ENCODE measurements at regions of chr14 and their contacts with region 1.

Region 1: GRCh38 chr14:35121887-35122695 is at the starts of genes PPP2R3C and PRORP:
- DNase-seq: peak; percentile 97 to 98
- H3K4me3 ChIP-seq: peak within 1 kb of the TSS; percentile 9 to 45 (median 44)
- H3K27ac ChIP-seq: peak within 1 kb of the TSS; percentile 90 to 97 (median 97)
- H3K4me1 ChIP-seq: peaks cover 6 to 24% of the 10 kb centered on the region in 2 donors
- H3K27me3 ChIP-seq: no peaks in the 10 kb centered on the region
- CTCF ChIP-seq: no peak
- POLR2A ChIP-seq: peak in 1 of 2 donors; percentile 70
- total RNA-seq, gene PPP2R3C: 15.1 to 31.0 (median 24.9) TPM
- total RNA-seq, gene PRORP: 23.6 to 45.4 (median 42.3) TPM

Region 2: DNA sequence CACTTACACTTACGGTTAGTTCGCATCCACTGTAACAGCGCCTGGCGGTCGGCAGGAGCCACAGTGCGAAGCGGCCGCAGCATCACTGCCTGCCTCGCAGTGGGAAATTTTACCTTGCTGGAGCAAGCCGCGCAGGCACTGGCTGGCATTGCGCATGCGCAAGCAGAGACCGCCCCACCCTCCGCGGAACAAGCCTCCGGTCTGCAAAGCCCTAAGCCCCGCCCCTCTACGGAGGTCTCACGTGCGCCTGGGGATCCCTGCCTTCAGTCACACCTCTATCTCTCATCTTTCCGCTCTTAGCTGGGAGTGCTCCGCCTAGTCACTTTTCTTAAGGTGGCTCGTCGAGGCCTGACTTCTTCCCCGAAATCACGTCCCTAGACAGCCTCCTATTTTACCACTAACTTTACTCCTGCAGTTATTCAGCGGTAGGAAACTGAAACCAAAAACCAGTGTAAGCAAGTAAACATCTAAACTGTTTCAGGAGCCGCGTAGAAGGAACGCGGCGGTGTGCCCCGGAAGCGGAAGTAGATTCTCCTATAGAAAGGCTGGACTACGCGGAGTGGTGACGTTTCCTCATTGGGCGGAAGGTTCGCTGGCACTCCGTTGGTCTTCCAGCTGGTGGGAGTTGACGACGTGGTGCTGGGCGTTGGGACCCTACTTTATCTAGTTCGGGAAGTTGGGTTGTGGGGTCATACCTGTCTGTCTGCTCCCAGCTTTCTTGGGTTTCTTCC is 139.5 kb before region 1 on chr14 and contains the start of gene SRP54:
- intact Hi-C with region 1: loop called (anchors 5 kb)
- DNase-seq: peak; percentile 100
- H3K4me3 ChIP-seq: peak within 1 kb of the TSS; percentile 68 to 81 (median 78)
- H3K27ac ChIP-seq: peak within 1 kb of the TSS; percentile 93 to 97 (median 96)
- H3K4me1 ChIP-seq: peaks cover 24 to 25% of the 10 kb centered on the region in 2 donors
- H3K27me3 ChIP-seq: no peaks in the 10 kb centered on the region
- CTCF ChIP-seq: peak in 3 of 6 experiments; percentile 35 to 44 (median 42)
- POLR2A ChIP-seq: peak; percentile 78 to 96
- total RNA-seq, gene SRP54: 58.5 to 122 (median 79.7) TPM

Region 3: GRCh38 chr14:35044939-35045797 is 76.9 kb before region 1 on chr14:
- intact Hi-C with region 1: loop called (anchors 5 kb)
- DNase-seq: no peak
- H3K4me3 ChIP-seq: peak overlapping the region in 2 of 3 donors; percentile 14 to 42
- H3K27ac ChIP-seq: peak overlapping the region; percentile 59 to 97 (median 91)
- H3K4me1 ChIP-seq: peaks cover 9 to 17% of the 10 kb centered on the region in 2 donors
- H3K27me3 ChIP-seq: no peaks in the 10 kb centered on the region
- CTCF ChIP-seq: no peak
- POLR2A ChIP-seq: no peak

Region 4: DNA sequence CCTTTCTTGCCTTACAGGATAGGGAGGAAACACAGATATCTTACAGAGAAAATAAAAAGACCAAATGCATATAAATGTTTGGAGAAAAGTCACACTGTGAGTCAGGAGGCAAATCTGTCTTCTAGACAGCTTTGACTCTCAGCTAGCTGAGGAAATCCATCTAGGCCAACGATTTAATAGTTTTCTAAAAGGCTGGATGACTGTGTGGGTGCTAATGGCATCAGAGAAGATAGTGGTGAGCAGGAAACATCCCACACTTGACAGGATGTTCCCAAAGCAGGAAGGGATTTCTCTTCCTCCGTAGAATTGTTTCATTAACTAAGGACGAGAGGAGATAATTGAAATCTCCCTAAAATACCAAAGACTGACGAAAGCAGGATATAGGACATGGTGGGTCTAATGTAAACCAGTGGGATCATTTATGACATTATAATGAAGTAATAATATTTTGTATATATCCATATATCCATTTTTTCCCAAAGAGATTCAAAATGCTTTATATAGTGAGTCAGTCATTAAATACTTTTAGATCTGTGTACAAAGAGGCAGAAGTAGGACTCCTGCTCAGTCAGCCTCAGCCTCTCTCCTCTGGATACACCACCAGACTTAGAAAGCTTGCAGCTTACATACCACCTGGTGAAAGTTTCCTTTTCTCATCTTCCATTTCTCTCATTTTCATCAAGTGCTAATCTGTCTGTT is 125.8 kb after region 1 on chr14:
- intact Hi-C with region 1: no loop called
- DNase-seq: no peak
- H3K4me3 ChIP-seq: no peak overlapping the region
- H3K27ac ChIP-seq: no peak overlapping the region
- H3K4me1 ChIP-seq: peaks cover 4 to 9% of the 10 kb centered on the region in 2 donors
- H3K27me3 ChIP-seq: no peaks in the 10 kb centered on the region
- CTCF ChIP-seq: no peak
- POLR2A ChIP-seq: no peak